Dendritic cell treated with granulocyte-macrophage colony-stimulating factor and Interleukin-4, amounts not matched to agents 40 ng/mL and 50 ng/mL, for 4 days (primary cell): ENCODE measurements at regions of chr7 and their contacts with region 1.

Region 1: DNA sequence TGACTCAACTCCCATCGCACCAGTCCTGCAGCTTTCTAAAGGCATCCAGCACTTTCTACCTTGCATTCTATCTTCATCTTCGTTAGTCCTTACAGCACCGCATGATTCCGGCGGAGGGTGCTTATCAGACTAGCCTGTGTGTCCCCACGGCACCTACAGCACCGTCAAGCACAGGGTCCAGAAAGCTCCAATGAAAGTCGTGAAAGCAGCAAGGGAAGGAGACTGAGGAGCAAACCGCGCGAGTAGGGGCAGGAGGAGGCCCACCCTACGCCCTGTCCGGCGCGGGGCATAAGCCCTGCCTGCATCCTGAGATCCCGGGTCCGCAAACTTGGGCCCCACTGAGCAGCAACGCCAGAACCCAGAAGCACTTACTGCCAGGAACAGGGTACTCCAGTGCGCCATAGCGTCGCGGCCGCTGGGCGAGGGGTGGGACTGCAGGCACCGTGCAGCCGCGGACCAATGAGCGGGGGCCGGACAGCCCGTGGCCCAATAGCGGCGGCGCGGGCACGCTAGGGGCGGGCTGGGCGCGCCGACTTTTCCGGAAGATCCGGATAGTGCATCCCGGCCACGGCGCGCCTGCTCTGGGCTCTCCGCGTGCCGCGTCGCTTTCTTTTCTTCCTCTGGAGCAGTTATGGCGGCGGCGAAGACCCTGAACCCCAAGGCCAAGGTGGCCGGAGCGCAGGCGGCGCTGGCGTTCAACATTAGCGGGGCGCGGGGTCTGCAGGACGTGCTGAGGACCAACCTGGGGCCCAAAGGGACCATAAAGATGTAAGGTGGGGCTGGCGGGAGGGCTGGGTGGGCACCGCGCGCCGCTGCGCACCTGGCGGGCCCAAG is 122.1 kb upstream of the VKORC1L1 start:
- H3K4me3 Mint-ChIP-seq: peak overlapping the region; percentile 90
- H3K27ac Mint-ChIP-seq: peak overlapping the region; percentile 82
- H3K4me1 Mint-ChIP-seq: no peaks in the 10 kb centered on the region
- H3K27me3 Mint-ChIP-seq: no peaks in the 10 kb centered on the region

Region 2: DNA sequence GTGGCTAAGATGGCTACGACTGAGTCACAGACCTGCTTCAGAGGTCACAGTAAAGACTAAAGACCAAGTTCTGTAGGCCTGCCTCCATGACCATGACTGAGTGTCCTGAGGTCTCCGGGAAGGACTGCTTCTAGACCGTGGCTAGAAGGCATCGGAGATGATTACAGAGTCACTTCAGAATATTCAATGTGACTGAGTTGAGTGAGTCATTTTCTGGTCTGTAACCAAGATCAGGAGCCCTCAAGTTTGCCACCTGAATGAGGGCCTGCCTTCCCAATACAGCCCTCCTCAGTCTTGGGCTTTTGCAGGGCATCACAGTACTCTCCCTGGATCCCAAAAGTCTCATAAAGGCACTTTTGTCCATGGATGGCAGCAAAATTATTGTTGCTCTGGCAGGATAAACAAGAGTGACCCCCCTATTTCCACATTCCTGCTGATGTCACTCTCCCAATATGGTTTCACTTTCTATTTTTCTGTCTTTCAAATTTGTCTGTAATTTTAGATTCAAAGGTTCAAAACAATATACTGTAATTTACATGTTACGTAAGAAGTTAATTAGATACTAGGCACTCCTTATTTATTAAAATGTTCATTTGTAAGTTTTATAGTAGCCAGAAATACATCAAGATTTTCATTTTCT is 424.8 kb before region 1 on chr7:
- intact Hi-C with region 1: no loop called
- H3K4me3 Mint-ChIP-seq: no peak overlapping the region
- H3K27ac Mint-ChIP-seq: no peak overlapping the region
- H3K4me1 Mint-ChIP-seq: no peaks in the 10 kb centered on the region
- H3K27me3 Mint-ChIP-seq: no peaks in the 10 kb centered on the region

Region 3: DNA sequence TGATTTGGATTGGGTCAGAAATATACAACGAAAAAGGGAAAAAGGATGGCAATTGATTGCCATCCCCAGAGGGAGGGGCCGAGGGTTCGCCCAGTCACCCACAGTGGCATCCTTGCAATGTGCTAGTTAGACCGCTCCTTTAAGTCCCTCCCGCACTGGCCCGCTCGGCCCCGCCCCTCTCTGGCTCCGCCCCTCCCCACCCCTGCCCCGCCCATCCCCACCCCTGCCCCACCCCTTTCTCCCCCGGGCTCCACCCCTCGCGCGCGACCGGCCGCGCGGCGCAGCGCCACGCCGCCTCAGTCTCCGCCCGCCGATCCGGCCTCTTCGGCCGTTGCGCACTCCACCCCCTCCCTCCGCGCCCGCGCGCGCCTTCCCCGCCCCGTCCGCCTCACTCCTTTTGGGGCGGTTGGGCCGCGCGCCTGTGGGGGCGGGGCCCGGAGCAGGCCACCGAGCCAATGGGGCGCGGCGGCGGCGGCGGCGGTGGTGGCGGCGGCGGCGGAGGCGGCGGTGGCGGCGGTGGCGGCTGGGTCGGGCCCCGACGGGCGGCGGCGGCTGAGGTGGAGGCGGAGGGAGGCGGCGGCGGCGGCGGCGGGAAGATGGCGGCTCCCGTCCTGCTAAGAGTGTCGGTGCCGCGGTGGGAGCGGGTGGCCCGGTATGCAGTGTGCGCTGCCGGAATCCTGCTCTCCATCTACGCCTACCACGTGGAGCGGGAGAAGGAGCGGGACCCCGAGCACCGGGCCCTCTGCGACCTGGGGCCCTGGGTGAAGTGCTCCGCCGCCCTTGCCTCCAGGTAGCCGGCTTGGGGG is 122.3 kb after region 1 on chr7 and contains the start of gene VKORC1L1:
- intact Hi-C with region 1: loop called (anchors 10 kb)
- H3K4me3 Mint-ChIP-seq: peak within 1 kb of the TSS; percentile 81
- H3K27ac Mint-ChIP-seq: peak within 1 kb of the TSS; percentile 72
- H3K4me1 Mint-ChIP-seq: peaks cover 25% of the 10 kb centered on the region
- H3K27me3 Mint-ChIP-seq: no peaks in the 10 kb centered on the region